OCI-LY7 (cell line): ENCODE measurements at regions of chr2 and their contacts with region 1.

Region 1: DNA sequence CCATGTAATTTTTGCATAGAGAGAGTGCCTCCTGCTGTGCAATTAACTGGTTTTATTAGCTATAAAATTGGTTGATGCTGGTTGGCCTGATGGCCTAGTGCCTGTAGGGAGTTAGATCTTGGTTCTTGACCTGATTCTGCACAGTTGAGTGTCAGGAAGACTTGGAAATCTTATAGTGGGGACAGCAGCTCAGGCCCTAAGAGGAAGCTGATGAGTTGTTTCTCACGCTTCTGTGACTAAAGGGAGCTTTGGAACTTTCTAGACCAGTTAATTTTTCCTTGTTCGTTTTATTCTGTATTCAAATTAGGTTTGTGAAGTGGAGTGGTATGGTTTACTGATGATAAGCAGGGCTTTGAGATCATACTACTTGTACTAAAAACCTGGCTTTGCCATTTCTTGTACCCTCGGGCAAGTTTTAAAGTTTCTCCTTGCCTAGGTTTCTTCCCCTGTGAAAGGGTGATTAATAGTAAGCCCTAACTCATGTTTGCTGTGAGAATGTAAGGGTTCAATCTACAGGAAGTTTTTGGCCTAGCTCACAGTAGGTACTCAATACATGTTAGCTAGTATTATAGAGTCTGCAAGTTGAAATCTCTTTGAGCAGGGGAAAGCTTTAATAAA is 82.1 kb downstream of the MAP3K20 start:
- DNase-seq: no peak
- H3K4me3 ChIP-seq: no peak overlapping the region
- H3K27ac ChIP-seq: no peak overlapping the region
- H3K4me1 ChIP-seq: no peaks in the 10 kb centered on the region
- CTCF ChIP-seq: no peak

Region 2: GRCh38 chr2:173075781-173076580 is 81.8 kb before region 1 on chr2 and contains the start of gene MAP3K20:
- CTCF ChIA-PET with region 1: no interaction called
- POLR2A ChIA-PET with region 1: no interaction called
- intact Hi-C with region 1: no loop called
- DNase-seq: peak; percentile 78
- H3K4me3 ChIP-seq: peak within 1 kb of the TSS; percentile 76
- H3K27ac ChIP-seq: peak within 1 kb of the TSS; percentile 39
- H3K4me1 ChIP-seq: peaks cover 14% of the 10 kb centered on the region
- CTCF ChIP-seq: peak; percentile 61
- total RNA-seq, gene MAP3K20: 8.2 and 9.1 TPM in 2 replicates

Region 3: GRCh38 chr2:174334781-174335251 is 1177.0 kb after region 1 on chr2 and contains the start of gene SP9:
- CTCF ChIA-PET with region 1: no interaction called
- POLR2A ChIA-PET with region 1: interaction called, 12 read pairs
- intact Hi-C with region 1: no loop called
- DNase-seq: no peak
- H3K4me3 ChIP-seq: no peak within 1 kb of the TSS
- H3K27ac ChIP-seq: no peak within 1 kb of the TSS
- H3K4me1 ChIP-seq: peaks cover 7% of the 10 kb centered on the region
- CTCF ChIP-seq: no peak
- total RNA-seq, gene SP9: not detected in 2 replicates